ENCODE measurements at regions of chr6 and their contacts with region 1.

Region 1: GRCh38 chr6:42532038-42532669 is 31.7 kb upstream of the UBR2 start:
- DNase-seq: peak; percentile 25
- ATAC-seq: peak; percentile 75
- H3K4me3 Mint-ChIP-seq: no peak overlapping the region
- H3K27ac Mint-ChIP-seq: no peak overlapping the region
- H3K4me1 Mint-ChIP-seq: peaks cover 2% of the 10 kb centered on the region
- H3K27me3 Mint-ChIP-seq: no peaks in the 10 kb centered on the region
- CTCF ChIP-seq: peak; percentile 96

Region 2: DNA sequence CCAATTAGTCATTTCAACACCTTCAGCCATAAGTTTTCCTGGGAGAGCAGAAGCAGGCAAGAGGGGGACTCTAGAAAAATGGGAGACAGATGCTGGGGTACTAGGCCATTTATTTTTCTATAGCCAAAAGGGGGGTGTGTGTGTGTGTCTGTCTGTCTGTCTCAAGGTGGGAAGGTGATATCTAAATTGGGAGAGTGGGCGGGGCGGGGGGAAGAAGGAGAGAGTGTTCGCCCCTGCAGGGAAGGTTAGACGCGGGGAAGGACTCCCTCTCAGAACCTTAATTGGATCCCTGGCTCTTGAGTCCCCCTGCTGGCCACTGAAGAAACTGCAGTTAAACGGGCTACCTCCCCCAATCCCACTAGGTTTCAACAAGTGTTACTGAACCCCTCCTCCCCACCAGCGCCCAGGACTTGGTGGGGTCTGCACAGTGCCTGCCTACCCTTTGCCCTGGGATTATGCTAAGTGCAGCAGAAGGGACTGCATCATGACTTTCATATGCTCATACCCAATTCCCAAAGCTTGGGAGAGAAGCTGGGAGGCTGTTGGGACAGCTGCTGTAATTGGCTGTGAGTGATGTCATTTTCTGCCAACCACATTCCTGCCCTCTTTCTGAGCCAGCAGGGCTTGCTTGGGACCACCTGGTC is 940.2 kb before region 1 on chr6:
- CTCF ChIA-PET with region 1: no interaction called
- POLR2A ChIA-PET with region 1: no interaction called
- intact Hi-C with region 1: no loop called
- DNase-seq: peak; percentile 85
- ATAC-seq: peak; percentile 97
- H3K4me3 Mint-ChIP-seq: no peak overlapping the region
- H3K27ac Mint-ChIP-seq: no peak overlapping the region
- H3K4me1 Mint-ChIP-seq: peaks cover 2% of the 10 kb centered on the region
- H3K27me3 Mint-ChIP-seq: no peaks in the 10 kb centered on the region
- CTCF ChIP-seq: peak; percentile 90

Region 3: DNA sequence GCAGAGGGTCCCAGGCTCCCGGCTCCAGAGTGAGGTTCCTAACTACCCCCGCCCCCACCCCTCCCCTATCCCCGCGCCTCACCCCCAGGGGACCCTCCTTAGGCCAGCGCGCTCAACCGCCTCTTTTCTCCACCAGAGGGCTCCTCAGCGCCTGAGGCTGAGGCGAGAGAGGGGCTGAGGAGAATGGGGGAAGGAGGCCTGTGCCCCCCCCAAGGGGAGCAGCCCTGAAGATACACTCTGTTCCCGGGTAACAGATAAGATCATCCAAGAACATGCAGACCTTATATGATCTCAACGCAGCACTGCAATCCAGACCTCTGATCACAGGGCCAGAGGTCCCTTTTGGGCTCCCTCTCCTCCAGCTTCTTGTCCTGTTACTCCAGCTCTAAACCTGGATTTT is 271.2 kb before region 1 on chr6:
- CTCF ChIA-PET with region 1: interaction called, 17 read pairs
- POLR2A ChIA-PET with region 1: no interaction called
- intact Hi-C with region 1: no loop called
- DNase-seq: peak; percentile 54
- ATAC-seq: peak; percentile 88
- H3K4me3 Mint-ChIP-seq: no peak overlapping the region
- H3K27ac Mint-ChIP-seq: no peak overlapping the region
- H3K4me1 Mint-ChIP-seq: peaks cover 2% of the 10 kb centered on the region
- H3K27me3 Mint-ChIP-seq: no peaks in the 10 kb centered on the region
- CTCF ChIP-seq: peak; percentile 76

Region 4: GRCh38 chr6:42304053-42304712 is 228.0 kb before region 1 on chr6:
- CTCF ChIA-PET with region 1: interaction called, 22 read pairs
- POLR2A ChIA-PET with region 1: no interaction called
- intact Hi-C with region 1: no loop called
- DNase-seq: no peak
- ATAC-seq: no peak
- H3K4me3 Mint-ChIP-seq: no peak overlapping the region
- H3K27ac Mint-ChIP-seq: no peak overlapping the region
- H3K4me1 Mint-ChIP-seq: peaks cover 7% of the 10 kb centered on the region
- H3K27me3 Mint-ChIP-seq: no peaks in the 10 kb centered on the region
- CTCF ChIP-seq: no peak

Region 5: GRCh38 chr6:42511803-42512422 is 20.2 kb before region 1 on chr6:
- CTCF ChIA-PET with region 1: interaction called, 18 read pairs
- POLR2A ChIA-PET with region 1: no interaction called
- intact Hi-C with region 1: no loop called
- DNase-seq: no peak
- ATAC-seq: no peak
- H3K4me3 Mint-ChIP-seq: no peak overlapping the region
- H3K27ac Mint-ChIP-seq: no peak overlapping the region
- H3K4me1 Mint-ChIP-seq: no peaks in the 10 kb centered on the region
- H3K27me3 Mint-ChIP-seq: no peaks in the 10 kb centered on the region
- CTCF ChIP-seq: no peak

Region 6: DNA sequence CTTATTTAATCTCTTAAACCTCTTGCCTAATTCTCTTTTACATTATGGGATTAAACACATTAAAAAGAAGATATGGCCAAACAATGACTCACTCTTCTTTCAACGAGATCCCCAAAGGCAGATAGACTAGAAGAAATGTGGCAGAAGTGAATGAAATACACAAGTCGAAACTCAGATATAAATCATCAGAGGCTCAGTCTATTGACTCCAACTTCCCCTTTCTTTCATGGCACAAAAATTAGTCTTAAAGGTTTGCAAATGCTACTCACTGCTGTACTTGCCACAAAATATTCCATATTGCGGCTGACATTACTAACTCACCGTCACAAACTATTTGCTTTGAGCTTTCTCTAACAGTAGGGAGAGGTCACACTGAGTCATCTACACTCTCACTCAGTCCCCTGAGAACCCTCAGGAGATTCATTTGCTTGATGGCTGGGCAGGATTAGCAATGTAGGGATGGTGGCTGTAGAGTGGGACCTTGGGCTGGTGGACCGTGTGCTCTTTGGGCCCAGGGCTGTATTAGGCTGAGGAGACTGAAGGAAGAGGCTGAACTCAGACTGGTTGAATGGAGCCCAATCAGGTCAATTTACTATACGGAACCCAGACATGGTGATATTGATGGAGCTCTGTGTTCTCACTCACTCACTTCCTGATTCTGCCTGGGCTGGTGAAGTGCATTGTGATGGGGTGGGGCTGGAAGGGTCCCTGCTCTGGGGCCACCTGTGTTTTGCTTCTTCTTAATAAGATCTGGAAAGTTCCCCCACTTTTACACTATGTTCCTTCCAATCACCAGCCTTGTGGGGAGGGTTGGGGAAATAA is 11.2 kb before region 1 on chr6:
- CTCF ChIA-PET with region 1: interaction called, 30 read pairs
- POLR2A ChIA-PET with region 1: no interaction called
- intact Hi-C with region 1: no loop called
- DNase-seq: peak; percentile 27
- ATAC-seq: peak; percentile 94
- H3K4me3 Mint-ChIP-seq: no peak overlapping the region
- H3K27ac Mint-ChIP-seq: peak overlapping the region; percentile 80
- H3K4me1 Mint-ChIP-seq: peaks cover 19% of the 10 kb centered on the region
- H3K27me3 Mint-ChIP-seq: no peaks in the 10 kb centered on the region
- CTCF ChIP-seq: no peak

Region 7: DNA sequence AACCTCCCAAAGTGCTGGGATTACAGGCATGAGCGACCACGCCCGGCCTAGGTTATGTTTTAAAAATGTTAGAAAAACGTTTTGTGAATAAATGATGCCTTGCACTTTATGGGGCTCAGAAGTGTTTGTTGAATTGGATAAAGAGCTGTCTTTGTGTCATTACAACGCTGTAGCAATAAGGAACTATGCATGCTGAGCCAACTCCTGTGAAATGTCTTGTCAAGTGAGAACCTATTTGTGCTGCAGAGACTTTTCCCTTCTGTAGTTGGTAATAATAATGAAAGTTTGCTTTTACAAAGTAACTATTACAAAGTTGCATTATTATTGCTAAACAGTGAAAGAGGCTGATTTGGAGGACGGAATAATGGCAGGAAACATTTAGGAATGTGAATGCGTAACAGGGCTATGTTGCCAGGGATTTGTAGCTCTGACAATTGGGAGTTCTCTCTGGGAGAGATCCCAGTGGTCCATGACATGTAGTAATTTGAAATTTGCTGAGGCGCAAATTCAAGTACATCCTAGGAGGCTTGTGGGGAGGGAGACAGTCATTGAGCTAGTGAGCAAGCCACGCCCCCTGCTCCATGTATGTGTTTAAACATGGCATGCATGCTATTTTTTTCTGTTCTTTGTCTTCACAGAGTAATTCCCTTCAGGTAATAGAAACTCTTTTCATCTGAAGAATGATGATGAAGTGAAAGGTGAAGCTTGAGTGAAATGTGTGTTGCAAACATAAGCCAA is 232.9 kb after region 1 on chr6:
- CTCF ChIA-PET with region 1: no interaction called
- POLR2A ChIA-PET with region 1: no interaction called
- intact Hi-C with region 1: no loop called
- DNase-seq: no peak
- ATAC-seq: no peak
- H3K4me3 Mint-ChIP-seq: no peak overlapping the region
- H3K27ac Mint-ChIP-seq: no peak overlapping the region
- H3K4me1 Mint-ChIP-seq: peaks cover 7% of the 10 kb centered on the region
- H3K27me3 Mint-ChIP-seq: no peaks in the 10 kb centered on the region
- CTCF ChIP-seq: no peak